ENCODE measurements at regions of chr1 and their contacts with region 1.

Region 1: GRCh38 chr1:153365303-153366095 is 7.8 kb downstream of the S100A9 start:
- DNase-seq: no peak
- H3K4me3 ChIP-seq: no peak overlapping the region
- H3K27ac ChIP-seq: no peak overlapping the region
- H3K4me1 ChIP-seq: no peaks in the 10 kb centered on the region
- H3K27me3 ChIP-seq: peaks cover 29% of the 10 kb centered on the region

Region 2: GRCh38 chr1:153488731-153489130 is 123.2 kb after region 1 on chr1:
- in situ Hi-C with region 1: loop called (anchors 10 kb)
- DNase-seq: peak; percentile 93
- H3K4me3 ChIP-seq: no peak overlapping the region
- H3K27ac ChIP-seq: peak overlapping the region; percentile 48
- H3K4me1 ChIP-seq: peaks cover 18% of the 10 kb centered on the region
- H3K27me3 ChIP-seq: peaks cover 8% of the 10 kb centered on the region; the same call in 1 of the 2 replicates

Region 3: DNA sequence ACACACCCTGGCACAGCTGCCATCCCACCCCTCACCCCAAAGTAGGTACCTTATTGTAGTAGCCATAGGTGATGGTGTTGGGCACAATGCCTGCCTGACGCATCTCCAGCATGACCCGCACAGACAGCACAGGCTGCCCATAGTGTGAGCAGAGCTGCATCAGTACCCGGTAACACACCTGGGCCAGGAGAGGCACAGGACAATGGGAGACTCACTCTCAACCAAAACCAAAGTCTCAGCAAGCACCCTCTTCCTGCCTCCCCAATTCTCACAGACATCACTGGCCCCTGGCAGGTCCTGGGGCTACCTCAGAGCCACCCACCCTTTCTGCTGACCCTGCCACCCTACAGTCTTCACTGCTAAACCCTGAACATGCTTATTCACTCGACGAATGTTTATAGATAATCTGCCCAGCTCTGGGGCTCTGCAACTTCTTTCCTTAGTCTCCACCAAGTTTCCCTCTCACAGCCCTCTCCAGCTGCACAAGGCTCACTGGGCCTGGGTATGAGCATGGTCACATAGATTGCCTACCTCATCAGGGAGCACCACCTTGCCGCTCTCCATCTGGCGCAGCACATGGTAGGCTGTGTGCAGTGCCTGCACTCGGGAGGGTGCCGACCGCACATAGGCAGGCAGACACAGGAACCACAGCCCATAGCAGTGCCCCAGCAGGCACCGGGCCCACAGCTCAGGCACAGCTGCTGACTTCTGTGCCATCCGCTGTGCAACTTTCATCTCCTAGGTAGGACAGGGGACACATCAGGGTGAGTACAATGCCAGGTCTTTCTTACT is 570.7 kb after region 1 on chr1:
- in situ Hi-C with region 1: no loop called
- DNase-seq: no peak
- H3K4me3 ChIP-seq: no peak overlapping the region
- H3K27ac ChIP-seq: no peak overlapping the region
- H3K4me1 ChIP-seq: no peaks in the 10 kb centered on the region
- H3K27me3 ChIP-seq: no peaks in the 10 kb centered on the region

Region 4: GRCh38 chr1:154324669-154325582 is 959.4 kb after region 1 on chr1 and contains the start of gene ATP8B2:
- in situ Hi-C with region 1: no loop called
- DNase-seq: peak; percentile 85
- H3K4me3 ChIP-seq: peak within 1 kb of the TSS; percentile 84
- H3K27ac ChIP-seq: peak within 1 kb of the TSS; percentile 100
- H3K4me1 ChIP-seq: peaks cover 17% of the 10 kb centered on the region
- H3K27me3 ChIP-seq: no peaks in the 10 kb centered on the region
- total RNA-seq, gene ATP8B2: 200 and 203 TPM in 2 replicates